ENCODE measurements at regions of chr2 and their contacts with region 1.

Region 1: GRCh38 chr2:71068218-71069035 is at the start of gene NAGK:
- DNase-seq: peak; percentile 92 to 98 (median 96)

Region 2: DNA sequence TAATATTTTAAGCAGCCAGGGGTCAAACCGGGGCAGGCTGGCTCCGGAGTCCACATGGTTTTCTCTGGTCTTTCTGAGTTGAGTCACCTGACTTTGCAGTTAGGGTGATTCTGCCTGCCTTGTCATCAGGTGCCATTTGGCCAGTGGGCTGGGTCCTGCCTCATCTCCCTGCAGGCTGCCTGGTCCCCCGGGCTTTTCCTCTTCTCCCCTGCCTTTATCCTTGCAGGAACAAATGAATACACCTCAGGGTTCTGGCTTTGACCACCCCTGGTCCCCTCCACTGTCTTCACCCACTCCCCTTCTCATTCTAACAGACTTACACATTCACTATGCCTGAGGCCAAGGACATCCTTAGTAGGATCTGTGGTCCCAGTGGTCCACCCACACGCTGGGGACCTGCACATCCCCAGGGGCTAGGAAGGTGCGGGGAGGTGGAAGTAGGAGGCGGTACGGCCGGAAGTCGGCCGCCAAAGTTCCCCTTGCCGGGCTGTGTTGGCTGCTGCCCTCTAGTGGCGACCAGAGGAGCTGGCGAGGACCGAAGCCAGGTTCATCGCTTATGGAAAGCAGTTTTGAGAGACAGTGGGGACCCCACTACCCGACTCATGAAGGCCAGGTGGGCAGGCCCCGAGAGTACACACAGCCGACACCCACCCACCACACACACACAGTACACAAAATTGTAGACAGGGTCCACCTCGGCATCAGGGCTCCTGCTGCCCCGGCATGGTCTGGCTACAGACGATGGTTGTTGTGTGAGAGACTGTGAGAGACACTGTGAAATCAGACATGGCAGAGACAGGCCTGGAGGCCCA is 67.4 kb before region 1 on chr2:
- intact Hi-C with region 1: loop called (anchors 5 kb)
- DNase-seq: peak; percentile 55 to 89 (median 78)

Region 3: GRCh38 chr2:71130113-71130904 is 61.9 kb after region 1 on chr2 and contains the starts of genes MCEE and MPHOSPH10:
- intact Hi-C with region 1: loop called (anchors 2 kb)
- DNase-seq: peak; percentile 83 to 97 (median 92)

Measured in head of caudate nucleus (tissue), 42 donors.